ENCODE measurements at regions of chr14 and their contacts with region 1.

Region 1: GRCh38 chr14:67240978-67241414 is 239 bp upstream of the PALS1 start:
- DNase-seq: peak; percentile 98
- H3K4me3 ChIP-seq: peak overlapping the region; percentile 77 to 86 (median 83)
- H3K27ac ChIP-seq: peak overlapping the region; percentile 94
- H3K4me1 ChIP-seq: peaks cover 11% of the 10 kb centered on the region
- H3K27me3 ChIP-seq: no peaks in the 10 kb centered on the region
- CTCF ChIP-seq: no peak

Region 2: DNA sequence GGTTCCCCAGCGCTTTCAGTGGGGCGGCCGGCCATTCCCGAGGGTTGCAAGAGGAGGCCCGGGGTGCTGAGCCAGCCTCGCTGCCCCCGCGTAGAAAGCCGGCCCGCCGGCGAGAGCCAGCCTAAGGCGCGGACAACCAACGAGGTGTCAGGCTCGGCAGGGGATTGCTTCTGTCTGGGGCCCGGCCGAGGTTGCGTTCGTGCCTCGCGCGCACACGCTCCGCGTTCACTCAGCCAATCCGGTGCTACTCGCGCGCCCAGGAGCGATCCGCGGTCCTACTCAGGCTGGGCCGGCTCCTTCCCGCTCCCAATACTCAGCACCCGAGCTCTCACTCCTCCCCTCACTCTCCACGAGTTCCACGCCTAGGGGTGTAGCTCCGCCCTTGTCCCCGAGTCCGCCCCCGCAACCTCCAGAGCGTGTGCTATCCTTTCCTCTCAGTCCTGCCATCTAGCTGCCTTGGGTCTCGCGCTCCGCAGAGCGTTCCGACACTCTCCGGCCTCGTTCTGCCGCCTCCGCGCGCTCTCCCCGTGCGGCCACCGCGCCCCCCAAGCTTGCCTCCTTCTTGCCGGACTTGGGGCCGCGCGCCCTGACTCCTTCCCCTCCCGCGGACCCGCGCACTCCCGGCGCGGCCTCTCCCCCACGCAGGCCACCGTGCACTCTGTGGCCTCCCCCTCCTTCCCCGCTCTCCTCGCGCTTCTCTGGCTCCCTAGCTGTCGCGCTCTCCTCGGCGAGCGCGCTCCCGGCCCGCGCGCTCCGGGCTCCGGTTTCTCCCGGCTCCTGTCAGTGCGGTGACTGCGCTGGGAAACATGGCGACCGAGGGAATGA is 733.1 kb before region 1 on chr14 and contains the start of gene GPHN:
- CTCF ChIA-PET with region 1: no interaction called
- dilution Hi-C with region 1: no loop called
- in situ Hi-C with region 1: no loop called
- intact Hi-C with region 1: loop called (anchors 5 kb)
- DNase-seq: peak; percentile 99
- H3K4me3 ChIP-seq: peak within 1 kb of the TSS; percentile 90 to 99 (median 95)
- H3K27ac ChIP-seq: peak within 1 kb of the TSS; percentile 68
- H3K4me1 ChIP-seq: peaks cover 10% of the 10 kb centered on the region
- H3K27me3 ChIP-seq: no peaks in the 10 kb centered on the region
- CTCF ChIP-seq: peak in 1 of 2 donors; percentile 44
- total RNA-seq, gene GPHN: 10.8 to 30.2 TPM

Region 3: GRCh38 chr14:67166450-67166853 is 74.5 kb before region 1 on chr14:
- CTCF ChIA-PET with region 1: no interaction called
- dilution Hi-C with region 1: no loop called
- in situ Hi-C with region 1: no loop called
- intact Hi-C with region 1: loop called (anchors 2 kb)
- DNase-seq: peak; percentile 21
- H3K4me3 ChIP-seq: no peak overlapping the region
- H3K27ac ChIP-seq: no peak overlapping the region
- H3K4me1 ChIP-seq: peaks cover 8% of the 10 kb centered on the region
- H3K27me3 ChIP-seq: no peaks in the 10 kb centered on the region
- CTCF ChIP-seq: peak; percentile 83 to 92

Region 4: DNA sequence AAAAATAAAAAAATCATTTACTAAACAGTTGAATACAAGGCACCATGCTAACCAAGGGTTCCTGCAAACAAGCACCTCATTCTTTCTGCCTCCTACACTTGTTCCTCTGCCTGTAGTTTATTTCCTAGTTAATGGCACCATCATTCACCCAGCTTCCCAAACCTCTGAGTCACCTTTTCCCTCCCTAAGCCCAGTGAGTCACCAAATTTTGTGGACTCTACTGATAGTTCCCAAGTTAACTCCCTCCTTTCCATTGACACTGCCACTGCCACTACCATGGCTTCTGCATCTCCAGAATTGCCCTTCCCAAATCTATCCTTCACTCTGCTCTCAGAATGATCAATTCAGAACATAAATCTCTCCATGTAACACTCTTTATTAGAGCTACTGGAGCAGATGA is 53.8 kb before region 1 on chr14:
- CTCF ChIA-PET with region 1: no interaction called
- dilution Hi-C with region 1: loop called (anchors 10 kb)
- in situ Hi-C with region 1: no loop called
- intact Hi-C with region 1: loop called (anchors 1 kb)
- DNase-seq: peak; percentile 84
- H3K4me3 ChIP-seq: no peak overlapping the region
- H3K27ac ChIP-seq: peak overlapping the region; percentile 34
- H3K4me1 ChIP-seq: peaks cover 37% of the 10 kb centered on the region
- H3K27me3 ChIP-seq: no peaks in the 10 kb centered on the region
- CTCF ChIP-seq: no peak

Region 5: GRCh38 chr14:67221248-67221981 is 19.6 kb before region 1 on chr14:
- CTCF ChIA-PET with region 1: no interaction called
- dilution Hi-C with region 1: no loop called
- in situ Hi-C with region 1: no loop called
- intact Hi-C with region 1: loop called (anchors 2 kb)
- DNase-seq: peak; percentile 83
- H3K4me3 ChIP-seq: no peak overlapping the region
- H3K27ac ChIP-seq: no peak overlapping the region
- H3K4me1 ChIP-seq: peaks cover 25% of the 10 kb centered on the region
- H3K27me3 ChIP-seq: no peaks in the 10 kb centered on the region
- CTCF ChIP-seq: no peak

Region 6: GRCh38 chr14:67285876-67286452 is 45.0 kb after region 1 on chr14:
- CTCF ChIA-PET with region 1: no interaction called
- dilution Hi-C with region 1: no loop called
- in situ Hi-C with region 1: no loop called
- intact Hi-C with region 1: loop called (anchors 2 kb)
- DNase-seq: peak; percentile 11
- H3K4me3 ChIP-seq: no peak overlapping the region
- H3K27ac ChIP-seq: no peak overlapping the region
- H3K4me1 ChIP-seq: no peaks in the 10 kb centered on the region
- H3K27me3 ChIP-seq: no peaks in the 10 kb centered on the region
- CTCF ChIP-seq: peak; percentile 38 to 53

Region 7: DNA sequence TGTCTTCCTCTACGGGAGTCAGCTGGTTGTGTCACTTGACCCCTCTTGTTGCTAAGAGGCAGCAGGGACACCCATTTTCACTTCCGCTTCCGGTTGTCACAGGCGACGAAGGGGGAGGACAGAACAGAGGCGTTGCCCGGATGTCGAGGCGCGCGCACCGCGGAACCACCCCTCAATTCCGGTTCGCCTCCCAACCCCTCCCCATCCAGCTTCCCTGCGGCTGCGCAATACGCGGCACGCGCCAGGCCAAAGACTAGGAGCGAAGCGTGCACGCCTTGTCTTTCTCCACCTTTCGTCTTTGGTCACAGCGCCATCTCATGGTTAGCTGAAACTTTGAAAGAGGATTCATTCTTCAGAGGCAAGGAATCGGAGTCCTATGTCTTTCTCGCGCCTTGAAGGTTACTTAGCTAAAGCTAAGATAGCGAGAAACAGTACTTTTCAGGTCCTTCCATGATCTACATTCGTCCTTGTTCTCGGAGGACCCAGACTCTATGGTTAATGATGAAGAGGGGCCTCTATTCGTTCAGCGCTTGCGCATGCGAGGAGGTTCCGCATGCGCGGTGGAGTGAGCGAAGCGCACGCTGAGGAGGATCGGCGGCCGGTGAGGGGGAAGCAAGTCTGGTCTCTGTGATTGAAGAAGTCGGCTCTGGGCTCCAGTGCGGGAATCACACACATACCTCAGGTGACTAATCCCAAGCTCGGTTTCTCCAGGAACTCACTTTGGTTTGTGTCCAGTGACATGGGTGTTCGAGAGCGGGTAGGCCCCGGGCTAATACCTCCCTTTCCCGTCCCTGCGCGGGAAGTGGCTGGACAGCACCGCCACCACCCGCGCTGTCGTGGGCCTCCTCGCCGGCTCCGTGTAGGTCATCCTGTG is 119.0 kb after region 1 on chr14 and contains the starts of genes ATP6V1D and EIF2S1:
- CTCF ChIA-PET with region 1: interaction called, 4 read pairs
- dilution Hi-C with region 1: no loop called
- in situ Hi-C with region 1: no loop called
- intact Hi-C with region 1: loop called (anchors 2 kb)
- DNase-seq: peak; percentile 99
- H3K4me3 ChIP-seq: peak within 1 kb of the TSS; percentile 82 to 90 (median 88)
- H3K27ac ChIP-seq: peak within 1 kb of the TSS; percentile 97
- H3K4me1 ChIP-seq: peaks cover 27% of the 10 kb centered on the region
- H3K27me3 ChIP-seq: no peaks in the 10 kb centered on the region
- CTCF ChIP-seq: peak; percentile 97 to 99
- total RNA-seq, gene ATP6V1D: 87.1 to 124 TPM
- total RNA-seq, gene EIF2S1: 120 to 198 TPM

Region 8: GRCh38 chr14:67908052-67908754 is 667.2 kb after region 1 on chr14:
- CTCF ChIA-PET with region 1: no interaction called
- dilution Hi-C with region 1: no loop called
- in situ Hi-C with region 1: no loop called
- intact Hi-C with region 1: no loop called
- DNase-seq: no peak
- H3K4me3 ChIP-seq: no peak overlapping the region
- H3K27ac ChIP-seq: no peak overlapping the region
- H3K4me1 ChIP-seq: no peaks in the 10 kb centered on the region
- H3K27me3 ChIP-seq: no peaks in the 10 kb centered on the region
- CTCF ChIP-seq: no peak

Measured in mammary epithelial cell (primary cell).